Natural killer cell (primary cell): ENCODE measurements at regions of chr10 and their contacts with region 1.

Region 1: DNA sequence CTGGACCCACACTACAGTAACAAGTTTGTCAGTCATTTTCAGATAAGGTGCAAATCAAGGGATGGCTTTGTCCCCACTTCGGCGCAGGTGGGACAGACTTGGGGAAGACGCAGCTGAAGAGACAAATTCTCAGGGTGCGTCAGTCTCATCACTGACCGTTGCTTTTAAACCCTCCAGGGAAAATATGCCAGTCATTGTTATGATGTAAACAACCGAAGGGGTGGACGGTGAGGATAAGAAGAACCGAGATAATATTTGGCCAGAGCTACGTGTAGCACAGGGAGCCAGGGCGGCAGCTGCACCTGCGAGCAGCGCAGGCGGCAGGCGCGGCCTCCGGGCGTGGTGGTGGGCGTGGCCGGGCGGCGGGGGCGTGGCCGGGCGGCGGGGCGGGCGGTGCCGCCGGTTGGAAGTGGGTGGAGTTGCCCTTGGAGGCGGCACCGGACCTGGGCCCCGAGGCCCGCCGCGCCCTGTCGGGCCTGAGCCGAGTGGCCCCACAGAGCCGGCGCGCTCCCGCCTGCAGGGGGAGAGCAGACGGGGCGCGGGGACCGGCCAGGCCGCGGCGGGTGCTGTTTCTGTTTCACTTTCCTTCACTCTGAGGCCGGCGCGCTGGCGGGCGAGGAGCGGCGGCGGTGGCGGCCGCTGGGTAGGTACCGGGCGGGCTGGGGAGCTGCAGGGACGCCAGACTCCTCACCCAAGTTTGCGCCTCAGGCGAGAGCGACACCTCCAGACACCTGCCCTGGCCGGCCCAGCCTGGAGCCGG is at the start of gene PCGF5:
- DNase-seq: peak; percentile 91 to 95
- ATAC-seq: peak; percentile 97 to 99 (median 97)
- H3K4me3 ChIP-seq: peak within 1 kb of the TSS; percentile 61
- H3K4me3 Mint-ChIP-seq: peak within 1 kb of the TSS; percentile 93
- H3K27ac ChIP-seq: peak within 1 kb of the TSS; percentile 84
- H3K27ac Mint-ChIP-seq: peak within 1 kb of the TSS; percentile 71 to 85
- H3K4me1 ChIP-seq: peaks cover 11% of the 10 kb centered on the region
- H3K4me1 Mint-ChIP-seq: peaks cover 33 to 38% of the 10 kb centered on the region in 2 donors
- H3K27me3 ChIP-seq: no peaks in the 10 kb centered on the region
- H3K27me3 Mint-ChIP-seq: no peaks in the 10 kb centered on the region
- CTCF ChIP-seq: peak; percentile 10
- total RNA-seq, gene PCGF5: 52.5 to 60.2 (median 58.6) TPM

Region 2: DNA sequence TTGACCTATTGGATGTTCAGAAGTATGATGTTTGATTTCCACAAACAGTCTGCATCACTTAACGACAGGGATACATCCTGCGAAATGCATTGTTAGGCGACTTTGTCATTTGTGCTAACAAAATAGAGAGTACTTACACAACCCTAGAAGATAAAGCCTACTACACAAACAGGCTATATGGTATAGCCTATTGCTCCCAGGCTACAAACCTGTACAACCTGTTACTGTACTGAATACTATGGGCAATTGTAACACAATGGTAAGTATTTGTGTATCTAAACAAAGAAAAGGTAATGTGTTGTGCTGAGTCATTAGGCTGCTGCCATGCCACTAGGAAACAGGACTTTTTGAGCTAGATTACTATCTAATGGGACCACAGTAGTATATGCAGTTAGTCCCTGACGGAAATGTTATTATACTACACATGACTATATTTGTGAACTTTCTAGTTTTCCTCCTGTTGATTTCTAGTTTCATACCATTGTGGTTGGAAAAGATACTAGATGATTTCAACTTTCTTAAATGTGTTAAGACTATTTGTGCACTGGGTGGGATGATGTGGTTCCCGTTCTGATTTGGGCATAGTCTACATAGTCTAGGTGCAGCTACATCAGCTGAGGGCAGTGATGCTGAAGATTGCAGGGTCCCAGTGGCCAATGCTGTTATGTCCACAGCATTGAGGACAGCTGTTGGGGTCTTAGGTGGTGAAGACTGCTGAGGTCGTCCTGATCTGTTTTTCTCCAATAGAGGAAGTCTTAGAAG is 524.3 kb before region 1 on chr10:
- intact Hi-C with region 1: no loop called
- DNase-seq: no peak
- ATAC-seq: no peak
- H3K4me3 ChIP-seq: no peak overlapping the region
- H3K4me3 Mint-ChIP-seq: no peak overlapping the region
- H3K27ac ChIP-seq: no peak overlapping the region
- H3K27ac Mint-ChIP-seq: no peak overlapping the region
- H3K4me1 ChIP-seq: no peaks in the 10 kb centered on the region
- H3K4me1 Mint-ChIP-seq: no peaks in the 10 kb centered on the region
- H3K27me3 ChIP-seq: no peaks in the 10 kb centered on the region
- H3K27me3 Mint-ChIP-seq: peaks cover 0 to 2% of the 10 kb centered on the region in 2 donors
- CTCF ChIP-seq: no peak

Region 3: DNA sequence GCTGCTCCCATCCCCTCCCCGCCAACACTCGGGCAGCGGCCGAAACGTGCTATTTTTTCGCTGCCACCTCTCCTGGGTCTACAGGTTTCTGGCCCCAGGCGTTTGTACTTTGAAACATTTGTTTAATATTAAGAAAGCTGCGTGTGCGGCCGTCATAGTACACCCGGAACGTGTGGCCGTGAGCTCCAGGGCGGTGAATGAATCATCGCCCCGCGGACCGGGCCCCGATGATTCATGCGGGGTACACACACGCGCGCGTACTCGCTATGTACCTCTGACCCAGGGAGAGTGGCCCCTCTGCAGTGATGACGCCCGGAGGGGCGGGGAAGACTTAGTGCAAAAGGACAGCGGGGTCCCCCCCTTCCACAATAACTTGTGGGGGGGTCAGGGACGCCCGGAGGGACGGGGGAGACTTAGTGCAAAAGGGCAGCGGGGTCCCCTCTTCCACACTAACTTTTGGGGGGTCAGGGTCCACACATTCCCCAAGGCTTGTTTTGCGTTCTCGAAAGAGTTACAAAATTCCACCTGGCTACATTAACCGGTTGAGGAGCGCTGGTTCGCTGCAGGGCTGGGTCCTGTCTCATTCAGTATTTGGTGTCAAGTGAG is 56.4 kb before region 1 on chr10:
- intact Hi-C with region 1: loop called (anchors 1 kb)
- DNase-seq: peak; percentile 78 to 81
- ATAC-seq: peak; percentile 39 to 61 (median 57)
- H3K4me3 ChIP-seq: peak overlapping the region; percentile 69
- H3K4me3 Mint-ChIP-seq: peak overlapping the region; percentile 97
- H3K27ac ChIP-seq: peak overlapping the region; percentile 96
- H3K27ac Mint-ChIP-seq: peak overlapping the region; percentile 90 to 98
- H3K4me1 ChIP-seq: peaks cover 17% of the 10 kb centered on the region
- H3K4me1 Mint-ChIP-seq: peaks cover 36 to 43% of the 10 kb centered on the region in 2 donors
- H3K27me3 ChIP-seq: no peaks in the 10 kb centered on the region
- H3K27me3 Mint-ChIP-seq: peaks cover 0 to 5% of the 10 kb centered on the region in 2 donors
- CTCF ChIP-seq: no peak

Region 4: GRCh38 chr10:91185239-91185875 is 35.0 kb before region 1 on chr10:
- intact Hi-C with region 1: loop called (anchors 5 kb)
- DNase-seq: no peak
- ATAC-seq: no peak
- H3K4me3 ChIP-seq: no peak overlapping the region
- H3K4me3 Mint-ChIP-seq: no peak overlapping the region
- H3K27ac ChIP-seq: no peak overlapping the region
- H3K27ac Mint-ChIP-seq: no peak overlapping the region
- H3K4me1 ChIP-seq: peaks cover 2% of the 10 kb centered on the region
- H3K4me1 Mint-ChIP-seq: peaks cover 51 to 56% of the 10 kb centered on the region in 2 donors
- H3K27me3 ChIP-seq: no peaks in the 10 kb centered on the region
- H3K27me3 Mint-ChIP-seq: no peaks in the 10 kb centered on the region
- CTCF ChIP-seq: no peak

Region 5: DNA sequence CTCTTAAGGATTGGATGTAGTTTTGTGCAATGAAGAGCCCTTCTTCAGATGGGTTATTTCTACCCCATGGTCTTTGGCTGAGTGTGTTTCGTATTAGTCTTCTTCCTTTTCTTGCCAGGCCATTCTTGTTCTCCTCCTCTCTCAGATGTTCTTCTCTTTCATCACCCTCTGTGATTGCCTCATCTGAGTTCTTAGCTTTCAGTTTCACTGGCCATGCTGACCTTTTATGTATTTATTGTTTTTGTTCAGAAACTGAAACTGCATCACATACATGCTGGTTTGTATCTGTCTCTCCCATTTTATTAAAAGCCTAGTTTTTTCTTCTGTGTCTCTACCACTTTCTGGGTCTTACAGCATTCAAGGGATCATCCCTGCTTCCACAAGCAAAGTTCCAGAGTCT is 21.6 kb before region 1 on chr10:
- intact Hi-C with region 1: loop called (anchors 2 kb)
- DNase-seq: peak in 1 of 2 donors; percentile 62
- ATAC-seq: peak; percentile 65 to 81 (median 79)
- H3K4me3 ChIP-seq: no peak overlapping the region
- H3K4me3 Mint-ChIP-seq: peak overlapping the region; percentile 43
- H3K27ac ChIP-seq: peak overlapping the region; percentile 86
- H3K27ac Mint-ChIP-seq: peak overlapping the region; percentile 86
- H3K4me1 ChIP-seq: peaks cover 34% of the 10 kb centered on the region
- H3K4me1 Mint-ChIP-seq: peaks cover 62 to 67% of the 10 kb centered on the region in 2 donors
- H3K27me3 ChIP-seq: no peaks in the 10 kb centered on the region
- H3K27me3 Mint-ChIP-seq: no peaks in the 10 kb centered on the region
- CTCF ChIP-seq: no peak

Region 6: GRCh38 chr10:91238191-91238590 is 17.8 kb after region 1 on chr10:
- intact Hi-C with region 1: no loop called
- DNase-seq: no peak
- ATAC-seq: no peak
- H3K4me3 ChIP-seq: no peak overlapping the region
- H3K4me3 Mint-ChIP-seq: no peak overlapping the region
- H3K27ac ChIP-seq: no peak overlapping the region
- H3K27ac Mint-ChIP-seq: peak overlapping the region in 1 of 2 donors; percentile 23
- H3K4me1 ChIP-seq: no peaks in the 10 kb centered on the region
- H3K4me1 Mint-ChIP-seq: peaks cover 18 to 25% of the 10 kb centered on the region in 2 donors
- H3K27me3 ChIP-seq: no peaks in the 10 kb centered on the region
- H3K27me3 Mint-ChIP-seq: no peaks in the 10 kb centered on the region
- CTCF ChIP-seq: no peak

Region 7: GRCh38 chr10:91797874-91798648 is 577.7 kb after region 1 on chr10 and contains the start of gene TNKS2:
- intact Hi-C with region 1: loop called (anchors 2 kb)
- DNase-seq: peak; percentile 92 to 97
- ATAC-seq: peak; percentile 77 to 91 (median 88)
- H3K4me3 ChIP-seq: peak within 1 kb of the TSS; percentile 95
- H3K4me3 Mint-ChIP-seq: peak within 1 kb of the TSS; percentile 97
- H3K27ac ChIP-seq: peak within 1 kb of the TSS; percentile 93
- H3K27ac Mint-ChIP-seq: peak within 1 kb of the TSS; percentile 97
- H3K4me1 ChIP-seq: peaks cover 6% of the 10 kb centered on the region
- H3K4me1 Mint-ChIP-seq: peaks cover 68 to 72% of the 10 kb centered on the region in 2 donors
- H3K27me3 ChIP-seq: no peaks in the 10 kb centered on the region
- H3K27me3 Mint-ChIP-seq: no peaks in the 10 kb centered on the region
- CTCF ChIP-seq: no peak
- total RNA-seq, gene TNKS2: 47.0 to 50.9 (median 47.9) TPM